PC-3 (cell line): ENCODE measurements at regions of chr10 and their contacts with region 1.

Region 1: GRCh38 chr10:125982260-125982948 is 86.0 kb downstream of the FANK1 start:
- DNase-seq: peak; percentile 84
- ATAC-seq: peak; percentile 77
- H3K4me3 ChIP-seq: no peak overlapping the region
- H3K27ac ChIP-seq: peak overlapping the region; percentile 31; the same call in 1 of the 2 replicates
- H3K4me1 ChIP-seq: peaks cover 9% of the 10 kb centered on the region
- H3K27me3 ChIP-seq: no peaks in the 10 kb centered on the region
- CTCF ChIP-seq: peak; percentile 66

Region 2: GRCh38 chr10:126001576-126001975 is 19.2 kb after region 1 on chr10:
- CTCF ChIA-PET with region 1: no interaction called
- POLR2A ChIA-PET with region 1: no interaction called
- intact Hi-C with region 1: no loop called
- DNase-seq: no peak
- ATAC-seq: no peak
- H3K4me3 ChIP-seq: no peak overlapping the region
- H3K27ac ChIP-seq: no peak overlapping the region
- H3K4me1 ChIP-seq: 0 out of 2 replicates have a peak, but pooled peaks cover 6% of the 10 kb centered on the region
- H3K27me3 ChIP-seq: no peaks in the 10 kb centered on the region
- CTCF ChIP-seq: no peak

Region 3: DNA sequence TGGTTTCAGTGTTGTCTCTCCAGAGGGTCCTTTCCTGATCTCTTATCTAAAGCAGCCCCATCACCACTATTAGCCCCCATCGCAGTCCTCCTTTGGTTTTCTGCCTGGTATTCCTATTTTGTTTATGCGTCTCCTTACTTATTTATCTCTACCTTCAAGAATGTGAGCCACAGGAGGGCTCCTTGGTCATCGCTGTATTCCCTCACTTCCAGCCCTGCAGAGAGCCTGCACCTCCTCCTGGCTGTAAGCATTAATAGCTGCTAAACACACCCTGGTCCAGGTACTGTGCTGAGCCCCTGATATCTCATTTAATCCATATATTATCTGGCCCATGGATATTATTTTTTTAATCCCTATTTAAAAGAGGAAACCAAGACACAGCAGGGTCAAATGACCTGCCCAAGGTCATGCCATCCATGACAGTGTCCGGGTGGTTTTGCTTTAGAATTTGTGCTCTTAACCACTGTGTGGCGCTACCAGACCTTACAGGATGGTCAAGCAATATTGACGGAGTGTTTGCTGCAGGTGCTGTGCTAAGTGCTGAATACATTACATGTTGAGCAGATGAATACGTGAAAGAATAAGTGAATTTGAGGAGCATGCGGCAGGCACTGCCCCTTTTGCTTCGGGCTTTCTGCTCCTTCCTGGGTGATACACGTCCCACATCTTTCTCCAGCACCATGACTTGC is 178.7 kb after region 1 on chr10:
- CTCF ChIA-PET with region 1: no interaction called
- POLR2A ChIA-PET with region 1: no interaction called
- intact Hi-C with region 1: loop called (anchors 10 kb)
- DNase-seq: peak; percentile 22
- ATAC-seq: no peak
- H3K4me3 ChIP-seq: no peak overlapping the region
- H3K27ac ChIP-seq: no peak overlapping the region
- H3K4me1 ChIP-seq: no peaks in the 10 kb centered on the region
- H3K27me3 ChIP-seq: no peaks in the 10 kb centered on the region
- CTCF ChIP-seq: peak; percentile 50

Region 4: DNA sequence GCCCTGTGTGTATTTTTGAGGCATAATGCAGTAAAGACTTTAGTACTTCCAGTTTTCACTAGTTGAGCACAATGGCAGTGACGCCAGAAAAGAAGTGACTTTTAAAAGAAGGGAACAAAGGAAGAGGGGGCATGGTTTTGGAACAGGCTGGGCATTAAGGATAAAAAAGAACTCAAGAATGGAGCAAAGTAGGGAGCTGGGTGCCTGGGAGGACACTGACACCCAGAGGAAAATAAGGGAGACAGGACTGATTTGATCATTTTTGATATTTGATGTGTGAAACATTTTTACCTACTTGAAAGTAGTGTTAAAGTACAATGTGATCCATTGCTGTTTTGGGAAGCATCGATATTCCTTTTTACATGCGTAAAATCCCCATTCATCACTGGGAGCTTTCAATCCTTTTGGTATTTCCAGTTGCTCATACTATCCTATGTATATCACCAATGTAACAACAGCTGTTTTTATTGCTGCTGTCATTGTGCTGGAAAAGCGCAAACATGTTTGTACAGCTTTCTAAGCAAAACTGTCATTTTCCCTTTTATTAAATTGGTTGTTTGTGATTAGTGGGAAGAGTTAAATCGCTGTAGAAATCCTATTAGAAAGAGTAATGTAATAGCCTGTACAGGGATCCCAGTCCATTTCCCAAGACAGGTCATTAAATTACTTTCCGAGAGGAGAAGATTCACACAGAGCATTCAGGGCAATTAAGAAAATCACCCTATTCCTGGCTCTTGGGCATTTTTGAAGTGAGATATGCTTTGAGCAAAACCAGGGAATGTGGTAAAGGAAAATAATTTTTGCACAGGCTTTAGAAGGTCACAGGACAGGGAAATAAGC is 320.6 kb after region 1 on chr10:
- CTCF ChIA-PET with region 1: interaction called, 4 read pairs
- POLR2A ChIA-PET with region 1: no interaction called
- intact Hi-C with region 1: loop called (anchors 1 kb)
- DNase-seq: peak; percentile 4
- ATAC-seq: peak; percentile 38; the same call in 1 of the 2 replicates
- H3K4me3 ChIP-seq: no peak overlapping the region
- H3K27ac ChIP-seq: no peak overlapping the region
- H3K4me1 ChIP-seq: no peaks in the 10 kb centered on the region
- H3K27me3 ChIP-seq: no peaks in the 10 kb centered on the region
- CTCF ChIP-seq: peak; percentile 41

Region 5: GRCh38 chr10:126504063-126504739 is 521.8 kb after region 1 on chr10:
- CTCF ChIA-PET with region 1: no interaction called
- POLR2A ChIA-PET with region 1: no interaction called
- intact Hi-C with region 1: loop called (anchors 1 kb)
- DNase-seq: peak; percentile 84
- ATAC-seq: peak; percentile 85
- H3K4me3 ChIP-seq: peak overlapping the region; percentile 33; the same call in 1 of the 2 replicates
- H3K27ac ChIP-seq: no peak overlapping the region
- H3K4me1 ChIP-seq: peaks cover 8% of the 10 kb centered on the region; the same call in 1 of the 2 replicates
- H3K27me3 ChIP-seq: no peaks in the 10 kb centered on the region
- CTCF ChIP-seq: peak; percentile 78